ENCODE measurements at regions of chr16 and their contacts with region 1.

Region 1: GRCh38 chr16:85420501-85421337 is 192.4 kb upstream of the GSE1 start:
- DNase-seq: peak; percentile 91
- CTCF ChIP-seq: peak; percentile 100

Region 2: GRCh38 chr16:85316321-85316919 is 104.3 kb before region 1 on chr16:
- CTCF ChIA-PET with region 1: no interaction called
- POLR2A ChIA-PET with region 1: no interaction called
- DNase-seq: peak; percentile 77
- CTCF ChIP-seq: peak; percentile 77

Region 3: DNA sequence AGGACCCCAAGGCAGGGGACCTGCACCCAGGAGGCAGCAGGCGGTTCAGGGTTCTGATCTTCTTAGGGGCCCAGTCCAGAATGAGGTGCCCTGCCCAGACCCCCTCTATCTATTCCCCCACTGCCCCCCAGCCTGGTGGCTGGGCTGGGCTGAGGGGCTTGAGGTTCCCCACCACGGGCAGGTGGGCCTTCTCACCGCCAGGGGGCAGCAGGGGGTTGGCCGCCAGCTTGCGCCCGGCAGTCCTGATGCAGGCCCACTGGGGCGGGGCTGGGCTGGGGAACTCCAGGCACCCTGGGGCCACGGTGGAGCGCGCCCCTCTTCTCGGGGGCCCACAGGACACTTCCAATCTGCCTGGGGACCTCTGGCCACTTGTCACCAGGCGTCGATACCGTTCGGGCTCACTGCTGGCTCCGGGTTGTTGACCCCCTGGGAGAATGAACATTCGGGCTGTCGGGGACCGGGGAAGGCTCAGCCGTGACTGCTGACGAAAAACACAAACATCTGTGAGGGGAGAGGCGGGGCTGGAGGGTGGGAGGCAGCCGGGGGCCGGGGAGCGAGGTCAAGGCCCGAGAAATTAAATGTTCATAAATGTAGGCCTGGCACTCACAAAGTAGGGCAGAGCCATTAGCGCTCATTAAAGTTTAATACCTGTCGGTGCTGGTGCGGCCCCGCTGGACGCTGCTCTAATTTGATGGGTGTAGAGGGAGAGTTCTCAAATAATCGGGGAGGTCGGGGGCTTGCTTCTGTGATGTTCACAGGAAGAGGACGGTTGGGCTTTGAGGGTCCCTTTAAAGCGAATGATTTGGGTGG is 26.8 kb before region 1 on chr16:
- CTCF ChIA-PET with region 1: interaction called, 16 read pairs
- POLR2A ChIA-PET with region 1: no interaction called
- DNase-seq: peak; percentile 88
- CTCF ChIP-seq: peak; percentile 81

Region 4: DNA sequence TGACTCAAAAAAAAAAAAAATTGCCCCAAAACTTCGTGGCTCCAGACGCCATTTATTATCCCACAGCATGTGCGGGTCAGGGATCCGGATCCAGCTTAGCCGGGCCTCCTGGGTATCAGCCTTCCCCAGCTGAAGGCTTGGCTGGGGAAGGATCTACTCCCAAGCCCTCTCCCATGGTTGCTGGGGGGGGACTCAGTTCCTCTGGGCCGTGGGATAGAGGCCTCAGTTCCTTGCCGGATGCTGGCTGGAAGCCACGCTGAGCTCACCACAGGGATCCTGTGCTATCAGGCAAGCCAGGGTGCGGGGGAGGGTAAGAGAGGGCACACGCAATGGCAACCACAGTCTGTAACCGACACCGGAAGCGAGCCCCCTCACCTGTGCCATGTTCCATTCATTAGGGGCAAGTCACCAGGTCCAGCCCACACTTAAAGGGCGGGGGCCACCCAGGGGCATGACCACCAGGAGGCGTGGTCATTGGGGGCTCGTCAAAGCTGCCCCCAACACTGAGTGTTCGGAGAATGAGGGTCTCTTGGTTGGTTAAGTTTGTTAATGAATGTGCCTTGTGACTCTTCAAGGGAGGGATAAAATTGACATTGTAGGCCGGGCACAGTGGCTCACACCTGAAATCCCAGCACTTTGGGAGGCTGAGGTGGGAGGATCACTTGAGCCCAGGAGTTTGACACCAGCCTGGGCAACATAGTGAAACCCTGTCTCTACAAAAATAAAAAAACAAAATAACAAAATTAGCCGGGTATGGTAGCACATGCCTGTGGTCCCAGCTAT is 17.6 kb before region 1 on chr16:
- CTCF ChIA-PET with region 1: interaction called, 24 read pairs
- POLR2A ChIA-PET with region 1: no interaction called
- DNase-seq: no peak
- CTCF ChIP-seq: no peak

Region 5: DNA sequence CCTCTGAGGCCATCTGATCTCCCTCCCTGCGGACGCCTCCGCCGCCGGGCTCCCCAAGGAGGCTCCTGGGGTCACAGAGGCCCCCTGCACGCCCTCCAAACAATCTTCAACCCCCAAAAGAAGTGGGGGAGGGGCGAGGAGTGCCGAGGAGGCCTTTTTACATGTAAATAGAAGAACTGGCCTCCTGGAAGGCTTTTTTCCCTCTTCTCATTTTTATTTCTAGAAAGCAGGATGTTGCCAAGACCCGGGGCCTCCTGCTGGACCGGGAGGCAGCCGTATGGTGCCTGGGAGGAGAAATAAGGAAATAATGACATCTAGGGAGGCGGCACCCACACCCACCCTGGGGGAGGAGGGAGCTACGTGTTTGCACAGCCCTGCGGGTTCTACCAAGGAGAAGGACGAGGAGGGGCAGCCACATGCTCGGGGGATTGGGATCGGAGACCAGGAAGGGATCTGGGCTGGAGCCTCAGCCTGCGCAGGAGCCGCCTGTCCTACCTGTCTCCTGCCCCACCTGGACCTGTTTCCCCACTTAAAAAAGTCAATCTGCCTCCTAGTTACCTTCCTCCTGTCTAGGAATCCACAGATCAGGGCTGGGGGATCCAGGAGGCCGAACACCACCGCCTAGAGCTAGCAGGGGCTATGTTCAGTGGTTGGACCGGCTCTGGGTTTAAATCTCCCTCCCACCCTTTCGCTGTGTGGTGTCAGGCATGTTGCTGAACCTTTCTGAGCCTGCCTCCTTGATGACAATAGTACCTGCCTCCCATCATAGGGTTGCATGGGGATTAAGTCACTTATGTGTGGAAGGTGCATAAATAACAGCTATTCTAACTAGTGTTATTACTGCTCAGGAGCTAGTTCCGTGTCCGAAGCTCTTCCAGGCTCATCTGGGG is 16.7 kb after region 1 on chr16:
- CTCF ChIA-PET with region 1: interaction called, 16 read pairs
- POLR2A ChIA-PET with region 1: no interaction called
- DNase-seq: no peak
- CTCF ChIP-seq: no peak

Region 6: DNA sequence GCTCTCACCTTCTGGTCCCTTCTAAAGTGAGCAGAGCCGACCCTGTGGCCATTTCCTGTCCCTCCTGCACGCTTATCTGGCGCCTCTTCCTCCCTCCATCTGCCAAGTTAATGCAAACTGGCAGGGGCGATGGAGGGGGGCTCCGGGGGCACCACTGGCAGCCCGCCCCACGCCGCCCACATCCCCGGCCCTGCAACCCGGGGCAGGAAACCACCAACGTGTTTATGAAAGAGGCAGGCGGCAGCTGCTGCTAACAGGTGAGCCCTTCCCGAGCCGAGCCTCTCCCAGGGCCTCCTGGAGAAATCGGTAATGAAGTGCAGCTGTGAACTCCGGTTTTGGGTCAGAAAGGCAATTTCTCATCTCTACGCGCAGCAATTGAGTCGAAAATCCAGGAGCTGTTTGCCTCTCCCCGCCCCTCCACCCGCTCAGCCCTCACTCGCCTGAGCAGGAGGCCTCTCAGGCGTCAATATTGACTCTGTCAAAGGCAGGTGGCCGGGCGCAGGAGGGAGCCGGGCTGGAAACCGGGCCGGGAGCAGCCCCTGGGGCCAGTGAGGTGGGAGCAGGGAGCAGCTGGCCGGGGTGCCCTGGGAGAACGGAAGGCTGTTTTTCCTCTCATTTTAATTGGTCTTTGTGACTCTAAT is 28.0 kb after region 1 on chr16:
- CTCF ChIA-PET with region 1: interaction called, 13 read pairs
- POLR2A ChIA-PET with region 1: no interaction called
- DNase-seq: no peak
- CTCF ChIP-seq: no peak

Region 7: GRCh38 chr16:85675251-85675927 is 254.7 kb after region 1 on chr16:
- CTCF ChIA-PET with region 1: no interaction called
- POLR2A ChIA-PET with region 1: no interaction called
- DNase-seq: no peak
- CTCF ChIP-seq: peak; percentile 37